ENCODE measurements at regions of chrX and their contacts with region 1.

Region 1: DNA sequence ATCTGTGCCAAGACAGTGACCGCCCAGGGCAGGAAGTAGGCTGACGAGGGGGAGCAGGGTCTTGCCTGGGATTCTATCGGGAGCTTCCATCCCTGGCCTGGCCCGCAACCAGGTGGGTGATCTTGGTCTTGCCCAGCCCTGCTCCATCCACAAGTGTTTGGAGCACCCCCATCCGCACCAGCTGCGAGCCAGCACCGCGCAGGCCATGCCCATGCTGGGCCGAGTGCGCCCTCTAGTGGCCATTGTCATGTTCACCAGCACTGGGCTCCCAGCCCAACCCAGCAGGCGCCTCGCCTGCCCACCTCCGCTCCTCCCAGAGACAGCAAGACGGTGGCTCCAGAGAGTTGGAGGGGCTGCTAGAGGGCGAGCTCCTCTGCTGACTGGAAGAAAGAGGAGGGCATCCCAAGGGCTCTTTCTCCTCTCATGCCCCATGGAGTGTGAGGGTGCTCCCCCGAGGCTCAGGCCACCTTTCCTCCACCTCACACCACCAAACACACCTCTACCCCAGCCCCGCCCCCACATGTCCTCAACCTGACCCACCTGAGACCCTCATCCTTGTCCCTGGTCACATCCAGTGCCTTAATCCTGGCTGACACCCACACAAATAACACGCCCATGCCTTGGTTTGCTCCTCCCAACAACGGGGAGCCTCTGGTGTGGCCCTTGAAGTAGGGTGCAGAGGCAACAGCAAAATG is 9.8 kb upstream of the ATP2B3 start:
- DNase-seq: peak; percentile 74 to 83
- ATAC-seq: peak; percentile 77 to 93 (median 86)
- H3K4me3 ChIP-seq: no peak overlapping the region
- H3K27ac ChIP-seq: peak overlapping the region in 1 of 10 donors; percentile 10
- H3K4me1 ChIP-seq: peaks cover 0 to 10% (median 0%) of the 10 kb centered on the region in 9 donors
- H3K27me3 ChIP-seq: peaks cover 0 to 10% (median 0%) of the 10 kb centered on the region in 7 donors
- CTCF ChIP-seq: peak; percentile 65 to 95 (median 82)

Region 2: GRCh38 chrX:153397256-153397960 is 110.2 kb before region 1 on chrX:
- intact Hi-C with region 1: loop called in 1 of 10 experiments (anchors 10 kb)
- DNase-seq: no peak
- ATAC-seq: no peak
- H3K4me3 ChIP-seq: no peak overlapping the region
- H3K27ac ChIP-seq: no peak overlapping the region
- H3K4me1 ChIP-seq: no peaks in the 10 kb centered on the region
- H3K27me3 ChIP-seq: no peaks in the 10 kb centered on the region
- CTCF ChIP-seq: no peak

Region 3: DNA sequence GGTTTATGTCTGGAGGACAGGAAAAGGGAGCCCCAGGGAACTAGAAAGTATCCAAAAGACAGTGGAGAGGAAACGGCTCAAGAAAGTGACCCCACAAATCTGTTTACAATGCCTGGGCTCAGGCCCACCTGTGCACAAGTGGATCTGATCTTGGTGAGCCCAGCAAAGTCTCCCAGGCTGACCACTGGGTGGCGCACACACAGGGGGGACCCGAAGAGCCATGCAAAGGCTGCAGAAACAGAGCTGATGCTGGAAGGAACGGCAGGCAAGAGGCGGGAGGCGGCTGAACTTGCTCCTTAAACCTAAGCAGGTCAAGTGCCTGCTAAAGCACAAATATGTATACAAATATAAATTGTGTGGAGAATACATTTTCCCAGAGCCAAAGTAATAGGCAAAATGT is 46.8 kb before region 1 on chrX:
- intact Hi-C with region 1: loop called in 4 of 10 experiments (anchors 5 to 10 kb)
- DNase-seq: peak; percentile 29 to 45
- ATAC-seq: peak in 3 of 8 donors; percentile 49 to 56 (median 55)
- H3K4me3 ChIP-seq: no peak overlapping the region
- H3K27ac ChIP-seq: no peak overlapping the region
- H3K4me1 ChIP-seq: peaks cover 0 to 8% (median 0%) of the 10 kb centered on the region in 9 donors
- H3K27me3 ChIP-seq: peaks cover 0 to 9% (median 0%) of the 10 kb centered on the region in 7 donors
- CTCF ChIP-seq: peak; percentile 11 to 66 (median 50)

Measured in heart right ventricle (tissue), 16 donors.